PC-9 (cell line): ENCODE measurements at regions of chr11 and their contacts with region 1.

Region 1: DNA sequence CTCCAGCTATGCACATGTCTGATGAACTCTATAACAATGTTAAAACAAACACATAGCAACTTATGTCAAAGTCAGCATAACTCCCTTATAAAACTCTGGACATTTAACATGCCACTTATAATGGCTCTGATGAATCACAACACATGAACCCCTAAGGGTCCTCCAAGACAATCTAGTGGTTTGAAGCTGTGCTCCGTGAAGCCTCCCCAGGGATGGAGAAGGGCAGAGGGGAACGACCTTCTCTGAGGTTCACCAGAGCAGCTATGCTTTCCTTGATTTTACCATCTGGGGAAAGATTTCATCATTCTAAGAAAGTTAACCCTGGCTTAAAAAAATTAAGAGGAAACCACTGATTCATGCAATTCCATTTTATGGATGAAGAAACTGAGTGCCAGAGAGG is 84.4 kb downstream of the MPPED2 start:
- DNase-seq: no peak
- H3K4me3 ChIP-seq: no peak overlapping the region
- H3K27ac ChIP-seq: no peak overlapping the region
- H3K4me1 ChIP-seq: no peaks in the 10 kb centered on the region
- H3K27me3 ChIP-seq: peaks cover 35% of the 10 kb centered on the region
- CTCF ChIP-seq: no peak

Region 2: DNA sequence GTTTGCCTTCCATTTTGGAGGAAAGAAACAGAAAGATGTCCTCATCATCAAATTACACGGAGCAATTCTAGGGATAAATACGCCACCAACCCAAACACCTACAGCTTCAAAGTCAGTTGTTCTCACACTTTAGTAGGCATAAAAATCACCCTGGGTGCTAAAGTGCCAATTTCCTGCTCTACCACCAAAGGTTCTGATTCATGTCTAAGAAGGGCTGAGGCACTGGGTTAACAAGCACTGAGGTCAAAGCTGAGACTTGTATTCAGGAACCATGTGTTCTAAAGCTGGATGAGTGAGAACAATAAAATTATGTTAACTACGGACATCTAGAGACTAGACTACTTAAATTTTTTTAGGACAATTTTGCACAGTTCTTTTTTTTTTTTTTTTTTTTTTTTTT is 43.2 kb before region 1 on chr11:
- CTCF ChIA-PET with region 1: no interaction called
- POLR2A ChIA-PET with region 1: interaction called, 11 read pairs
- intact Hi-C with region 1: no loop called
- DNase-seq: no peak
- H3K4me3 ChIP-seq: no peak overlapping the region
- H3K27ac ChIP-seq: no peak overlapping the region
- H3K4me1 ChIP-seq: no peaks in the 10 kb centered on the region
- H3K27me3 ChIP-seq: peaks cover 43% of the 10 kb centered on the region
- CTCF ChIP-seq: no peak

Region 3: DNA sequence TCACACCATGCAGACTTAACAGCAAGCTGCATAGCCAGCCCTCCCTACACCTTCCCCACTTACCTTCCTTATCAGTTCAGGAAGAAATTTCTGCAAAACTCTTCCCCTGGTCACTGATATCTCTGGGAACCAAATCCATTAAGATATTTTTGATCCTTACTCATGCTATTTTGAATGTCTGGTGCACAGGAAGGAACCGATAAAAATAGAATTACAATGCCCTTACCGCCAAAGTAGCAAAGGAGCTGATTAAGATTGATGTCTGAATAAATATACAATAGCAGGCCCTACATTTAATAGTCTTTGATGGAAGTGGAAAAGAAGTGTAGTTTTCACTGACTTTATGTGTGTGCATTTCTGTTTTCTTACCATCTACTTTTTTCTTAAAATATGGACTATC is 32.9 kb before region 1 on chr11:
- CTCF ChIA-PET with region 1: no interaction called
- POLR2A ChIA-PET with region 1: no interaction called
- intact Hi-C with region 1: no loop called
- DNase-seq: no peak
- H3K4me3 ChIP-seq: no peak overlapping the region
- H3K27ac ChIP-seq: no peak overlapping the region
- H3K4me1 ChIP-seq: no peaks in the 10 kb centered on the region
- H3K27me3 ChIP-seq: no peaks in the 10 kb centered on the region
- CTCF ChIP-seq: no peak

Region 4: GRCh38 chr11:30521297-30522042 is 19.7 kb after region 1 on chr11:
- CTCF ChIA-PET with region 1: no interaction called
- POLR2A ChIA-PET with region 1: no interaction called
- intact Hi-C with region 1: no loop called
- DNase-seq: no peak
- H3K4me3 ChIP-seq: no peak overlapping the region
- H3K27ac ChIP-seq: no peak overlapping the region
- H3K4me1 ChIP-seq: no peaks in the 10 kb centered on the region
- H3K27me3 ChIP-seq: peaks cover 25% of the 10 kb centered on the region; the same call in 1 of the 2 replicates
- CTCF ChIP-seq: no peak